IMR-90 (cell line): ENCODE measurements at regions of chr20 and their contacts with region 1.

Region 1: DNA sequence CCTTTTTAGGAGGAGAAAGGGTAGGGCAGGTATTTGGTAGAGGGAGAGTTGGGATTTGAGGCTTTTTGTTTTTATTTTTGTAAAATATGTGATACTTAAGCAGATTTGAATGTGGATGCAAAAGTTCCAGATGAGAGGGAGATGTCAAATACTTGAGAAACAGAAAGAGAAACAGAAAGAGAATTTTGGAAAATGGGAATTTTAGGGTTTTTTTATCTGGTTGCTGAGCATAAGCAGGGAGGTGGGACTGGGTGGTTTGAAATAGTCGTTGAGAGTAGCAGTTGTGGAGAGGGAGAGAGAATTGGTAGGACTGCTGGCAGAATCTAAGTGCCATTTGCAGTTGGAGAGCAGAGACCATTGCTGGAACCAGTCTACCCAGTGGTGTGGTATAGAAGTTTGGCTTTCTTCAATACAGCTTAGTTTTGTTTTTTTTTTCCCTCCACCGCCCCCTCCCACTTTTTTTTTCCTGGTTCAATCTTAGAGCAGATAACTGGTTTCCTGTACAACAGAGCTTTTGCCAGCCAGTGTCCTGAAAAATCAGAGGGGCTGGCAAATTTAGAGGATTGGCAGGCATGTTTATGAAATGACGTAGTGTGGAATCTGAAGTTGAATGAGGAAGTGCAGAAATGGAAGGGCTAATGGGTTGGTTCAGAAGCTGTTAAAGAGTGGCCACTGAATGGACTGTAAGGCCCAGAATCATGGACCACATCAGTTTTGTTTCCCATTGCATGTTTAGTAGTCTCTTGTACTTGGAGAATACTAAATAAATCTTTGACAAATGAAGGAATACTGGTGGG is 68.7 kb downstream of the ATRN start:
- DNase-seq: no peak
- ATAC-seq: no peak
- H3K4me3 ChIP-seq: no peak overlapping the region
- H3K27ac ChIP-seq: no peak overlapping the region
- H3K4me1 ChIP-seq: peaks cover 4% of the 10 kb centered on the region; the same call in 1 of the 2 replicates
- H3K27me3 ChIP-seq: no peaks in the 10 kb centered on the region
- CTCF ChIP-seq: no peak
- POLR2A ChIP-seq: no peak
- RAD21 ChIP-seq: no peak

Region 2: DNA sequence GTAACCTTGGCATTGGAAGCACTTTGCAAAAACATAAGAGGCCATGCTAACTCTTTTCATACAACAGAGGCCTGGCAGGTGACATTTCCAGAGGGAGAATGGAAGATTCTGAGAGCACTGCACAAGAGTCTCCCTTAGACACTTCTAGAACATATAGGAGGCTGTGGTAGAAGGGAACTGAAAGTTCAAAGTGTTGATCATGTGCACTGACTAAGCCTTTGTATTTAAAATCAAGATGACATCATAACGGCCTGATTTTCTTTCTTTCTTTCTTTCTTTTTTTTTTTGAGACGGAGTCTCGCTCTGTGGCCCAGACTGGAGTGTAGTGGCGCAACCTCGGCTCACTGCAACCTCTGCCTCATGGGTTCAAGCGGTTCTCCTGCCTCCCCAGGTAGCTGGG is 105.3 kb before region 1 on chr20:
- CTCF ChIA-PET with region 1: no interaction called
- POLR2A ChIA-PET with region 1: interaction called, 17 read pairs
- dilution Hi-C with region 1: no loop called
- in situ Hi-C with region 1: no loop called
- intact Hi-C with region 1: no loop called
- DNase-seq: no peak
- ATAC-seq: no peak
- H3K4me3 ChIP-seq: no peak overlapping the region
- H3K27ac ChIP-seq: no peak overlapping the region
- H3K4me1 ChIP-seq: no peaks in the 10 kb centered on the region
- H3K27me3 ChIP-seq: peaks cover 2% of the 10 kb centered on the region
- CTCF ChIP-seq: no peak
- POLR2A ChIP-seq: no peak
- RAD21 ChIP-seq: no peak

Region 3: GRCh38 chr20:3483784-3484183 is 55.7 kb before region 1 on chr20:
- CTCF ChIA-PET with region 1: no interaction called
- POLR2A ChIA-PET with region 1: no interaction called
- dilution Hi-C with region 1: no loop called
- in situ Hi-C with region 1: no loop called
- intact Hi-C with region 1: loop called (anchors 10 kb)
- DNase-seq: peak; percentile 40
- ATAC-seq: peak; percentile 75
- H3K4me3 ChIP-seq: no peak overlapping the region
- H3K27ac ChIP-seq: no peak overlapping the region
- H3K4me1 ChIP-seq: 0 out of 2 replicates have a peak, but pooled peaks cover 3% of the 10 kb centered on the region
- H3K27me3 ChIP-seq: no peaks in the 10 kb centered on the region
- CTCF ChIP-seq: no peak
- POLR2A ChIP-seq: no peak
- RAD21 ChIP-seq: no peak

Region 4: GRCh38 chr20:3521852-3522740 is 17.4 kb before region 1 on chr20:
- CTCF ChIA-PET with region 1: interaction called, 10 read pairs
- POLR2A ChIA-PET with region 1: no interaction called
- dilution Hi-C with region 1: no loop called
- in situ Hi-C with region 1: no loop called
- intact Hi-C with region 1: no loop called
- DNase-seq: no peak
- ATAC-seq: 0 out of 2 replicates have a peak, but pooled peaks have one; percentile 40
- H3K4me3 ChIP-seq: no peak overlapping the region
- H3K27ac ChIP-seq: peak overlapping the region; percentile 66; the same call in 1 of the 2 replicates
- H3K4me1 ChIP-seq: no peaks in the 10 kb centered on the region
- H3K27me3 ChIP-seq: no peaks in the 10 kb centered on the region
- CTCF ChIP-seq: no peak
- POLR2A ChIP-seq: no peak
- RAD21 ChIP-seq: no peak

Region 5: GRCh38 chr20:3871550-3872297 is 332.2 kb after region 1 on chr20:
- CTCF ChIA-PET with region 1: no interaction called
- POLR2A ChIA-PET with region 1: no interaction called
- dilution Hi-C with region 1: no loop called
- in situ Hi-C with region 1: no loop called
- intact Hi-C with region 1: no loop called
- DNase-seq: no peak
- ATAC-seq: 0 out of 2 replicates have a peak, but pooled peaks have one; percentile 5
- H3K4me3 ChIP-seq: no peak overlapping the region
- H3K27ac ChIP-seq: no peak overlapping the region
- H3K4me1 ChIP-seq: no peaks in the 10 kb centered on the region
- H3K27me3 ChIP-seq: no peaks in the 10 kb centered on the region
- CTCF ChIP-seq: no peak
- POLR2A ChIP-seq: no peak
- RAD21 ChIP-seq: no peak